ENCODE measurements at regions of chr14 and their contacts with region 1.

Region 1: GRCh38 chr14:36672095-36672494 is 10.4 kb downstream of the PAX9 start:
- DNase-seq: no peak
- ATAC-seq: no peak
- H3K4me3 ChIP-seq: no peak overlapping the region
- H3K27ac ChIP-seq: no peak overlapping the region
- H3K4me1 ChIP-seq: peaks cover 0 to 2% (median 0%) of the 10 kb centered on the region in 9 donors
- H3K27me3 ChIP-seq: peaks cover under 1 to 100% (median 97%) of the 10 kb centered on the region in 7 donors
- CTCF ChIP-seq: no peak

Region 2: DNA sequence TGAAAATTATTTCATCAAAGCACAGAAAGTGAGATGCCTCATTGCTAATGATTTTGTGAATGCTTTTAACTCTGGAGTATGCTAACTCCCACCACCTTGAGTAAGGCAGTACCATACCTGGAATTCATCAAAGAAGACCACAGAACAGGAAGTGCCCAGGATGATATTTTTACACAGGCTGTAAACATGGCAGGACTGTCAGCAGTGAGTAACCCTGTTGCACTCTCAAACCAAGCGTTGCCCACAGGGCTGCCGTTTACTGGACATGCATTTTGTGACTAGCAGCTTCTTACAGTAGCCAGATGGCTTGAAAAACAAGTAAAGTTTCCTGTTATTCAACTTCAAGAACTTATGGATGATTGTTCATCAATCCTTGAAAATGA is 905.4 kb before region 1 on chr14:
- intact Hi-C with region 1: no loop called
- DNase-seq: no peak
- ATAC-seq: no peak
- H3K4me3 ChIP-seq: no peak overlapping the region
- H3K27ac ChIP-seq: no peak overlapping the region
- H3K4me1 ChIP-seq: no peaks in the 10 kb centered on the region
- H3K27me3 ChIP-seq: no peaks in the 10 kb centered on the region
- CTCF ChIP-seq: no peak

Region 3: GRCh38 chr14:36161776-36162175 is 510.3 kb before region 1 on chr14:
- intact Hi-C with region 1: no loop called
- DNase-seq: no peak
- ATAC-seq: no peak
- H3K4me3 ChIP-seq: no peak overlapping the region
- H3K27ac ChIP-seq: no peak overlapping the region
- H3K4me1 ChIP-seq: no peaks in the 10 kb centered on the region
- H3K27me3 ChIP-seq: peaks cover 0 to 12% (median 3%) of the 10 kb centered on the region in 7 donors
- CTCF ChIP-seq: no peak

Region 4: DNA sequence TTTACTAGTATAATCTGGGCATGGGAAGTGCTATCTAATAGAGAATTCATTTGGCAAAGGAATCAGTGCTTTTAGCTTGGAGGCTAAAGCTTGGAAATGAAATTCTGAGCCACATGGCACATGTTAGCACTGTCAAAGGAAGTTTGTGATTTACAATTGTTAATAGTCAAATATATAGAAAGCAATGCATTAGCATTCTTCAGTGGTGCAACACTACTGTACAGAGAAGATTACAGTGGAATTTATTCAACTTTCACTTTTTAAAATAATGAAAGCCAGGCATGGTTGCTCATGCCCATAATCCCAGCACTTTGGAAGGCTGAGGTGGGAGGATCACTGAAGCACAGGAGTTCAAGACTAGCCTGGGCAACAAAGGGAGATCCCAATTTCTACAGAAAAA is 35.5 kb after region 1 on chr14:
- intact Hi-C with region 1: loop called in 1 of 10 experiments (anchors 2 kb)
- DNase-seq: no peak
- ATAC-seq: no peak
- H3K4me3 ChIP-seq: no peak overlapping the region
- H3K27ac ChIP-seq: no peak overlapping the region
- H3K4me1 ChIP-seq: no peaks in the 10 kb centered on the region
- H3K27me3 ChIP-seq: no peaks in the 10 kb centered on the region
- CTCF ChIP-seq: no peak

Region 5: GRCh38 chr14:36874396-36875161 is 202.5 kb after region 1 on chr14:
- intact Hi-C with region 1: no loop called
- DNase-seq: no peak
- ATAC-seq: no peak
- H3K4me3 ChIP-seq: no peak overlapping the region
- H3K27ac ChIP-seq: no peak overlapping the region
- H3K4me1 ChIP-seq: no peaks in the 10 kb centered on the region
- H3K27me3 ChIP-seq: no peaks in the 10 kb centered on the region
- CTCF ChIP-seq: no peak

Region 6: GRCh38 chr14:36915081-36915480 is 243.0 kb after region 1 on chr14:
- intact Hi-C with region 1: no loop called
- DNase-seq: no peak
- ATAC-seq: no peak
- H3K4me3 ChIP-seq: no peak overlapping the region
- H3K27ac ChIP-seq: no peak overlapping the region
- H3K4me1 ChIP-seq: no peaks in the 10 kb centered on the region
- H3K27me3 ChIP-seq: peaks cover 0 to 6% (median 0%) of the 10 kb centered on the region in 7 donors
- CTCF ChIP-seq: no peak